Panc1 (cell line): ENCODE measurements at regions of chr2 and their contacts with region 1.

Region 1: GRCh38 chr2:209536363-209536762 is 112.5 kb downstream of the MAP2 start:
- DNase-seq: no peak
- ATAC-seq: no peak
- H3K4me3 ChIP-seq: no peak overlapping the region
- H3K27ac ChIP-seq: no peak overlapping the region
- H3K4me1 ChIP-seq: no peaks in the 10 kb centered on the region
- H3K27me3 ChIP-seq: no peaks in the 10 kb centered on the region
- CTCF ChIP-seq: no peak

Region 2: GRCh38 chr2:209458008-209458979 is 78.1 kb before region 1 on chr2:
- CTCF ChIA-PET with region 1: no interaction called
- POLR2A ChIA-PET with region 1: no interaction called
- in situ Hi-C with region 1: no loop called
- intact Hi-C with region 1: no loop called
- DNase-seq: no peak
- ATAC-seq: no peak
- H3K4me3 ChIP-seq: no peak overlapping the region
- H3K27ac ChIP-seq: no peak overlapping the region
- H3K4me1 ChIP-seq: no peaks in the 10 kb centered on the region; the same call in 1 of the 2 replicates
- H3K27me3 ChIP-seq: no peaks in the 10 kb centered on the region
- CTCF ChIP-seq: no peak

Region 3: DNA sequence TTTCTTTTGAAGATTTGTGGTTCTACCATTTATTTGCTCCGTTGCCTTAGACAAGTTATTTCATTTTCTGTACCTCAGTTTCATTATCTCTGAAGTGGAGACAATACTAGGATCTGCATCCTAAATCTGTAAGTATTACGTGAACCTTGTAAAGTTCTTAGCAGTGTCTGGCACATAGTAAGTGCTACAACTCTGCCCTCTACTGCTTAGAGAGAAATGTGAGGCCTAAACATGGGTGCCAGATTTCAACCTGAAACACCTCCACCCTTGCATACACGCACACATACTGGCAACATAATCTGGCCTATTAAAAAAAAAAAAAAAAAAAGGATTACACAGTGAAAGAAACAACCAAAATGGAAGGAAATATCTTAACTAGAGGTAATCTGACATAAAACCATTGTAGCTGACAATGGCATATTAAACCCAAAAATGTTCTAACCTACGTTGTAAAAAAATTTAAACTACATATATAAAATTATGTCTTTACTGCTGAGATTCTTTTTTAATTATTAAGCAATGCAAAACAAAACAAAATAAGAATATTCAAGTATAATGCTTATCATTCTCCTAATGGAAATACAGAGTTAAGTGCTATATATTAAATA is 20.1 kb after region 1 on chr2:
- CTCF ChIA-PET with region 1: interaction called, 8 read pairs
- POLR2A ChIA-PET with region 1: interaction called, 10 read pairs
- in situ Hi-C with region 1: no loop called
- intact Hi-C with region 1: no loop called
- DNase-seq: peak; percentile 18
- ATAC-seq: peak; percentile 89
- H3K4me3 ChIP-seq: no peak overlapping the region
- H3K27ac ChIP-seq: no peak overlapping the region
- H3K4me1 ChIP-seq: no peaks in the 10 kb centered on the region
- H3K27me3 ChIP-seq: no peaks in the 10 kb centered on the region
- CTCF ChIP-seq: peak; percentile 67